Ovary (tissue), 10 donors: ENCODE measurements at regions of chr11 and their contacts with region 1.

Region 1: DNA sequence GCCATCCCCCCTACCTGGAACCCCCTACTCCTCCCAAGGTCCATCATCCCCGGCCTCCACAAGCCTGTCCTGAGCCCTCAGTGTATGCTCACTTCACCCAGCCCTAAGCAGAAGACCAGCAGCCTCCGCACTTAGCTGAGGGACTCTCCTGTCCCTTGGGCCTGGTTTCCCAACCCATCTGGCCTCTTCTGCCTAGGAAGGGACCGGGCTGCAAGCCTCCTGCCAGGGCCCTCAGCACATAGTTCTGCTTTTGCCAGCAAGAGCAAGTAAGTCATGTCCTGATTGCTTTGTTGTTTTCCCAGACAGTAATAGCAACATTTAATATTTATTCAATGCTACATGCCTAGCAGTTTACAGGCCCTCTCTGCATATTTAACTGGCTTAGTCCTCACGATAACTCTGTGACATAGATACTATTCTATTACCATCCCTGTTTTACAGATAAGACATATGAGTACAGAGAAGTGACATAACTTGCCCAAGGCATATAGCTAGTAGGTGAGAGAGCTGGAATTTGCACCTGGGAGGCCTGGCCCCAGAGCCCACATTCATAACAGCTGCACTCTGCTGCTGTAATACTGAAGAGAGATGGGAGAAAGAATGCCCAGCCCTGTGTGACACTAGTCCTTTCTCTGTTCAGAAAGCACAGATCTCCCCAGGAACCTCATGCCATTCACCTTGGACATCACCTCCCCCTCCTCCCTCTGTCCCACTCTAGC is 139.2 kb downstream of the PARVA start:
- DNase-seq: no peak
- H3K4me3 ChIP-seq: no peak overlapping the region
- H3K27ac ChIP-seq: no peak overlapping the region
- H3K4me1 ChIP-seq: no peaks in the 10 kb centered on the region
- H3K27me3 ChIP-seq: no peaks in the 10 kb centered on the region
- CTCF ChIP-seq: no peak
- EP300 ChIP-seq: no peak
- POLR2A ChIP-seq: no peak

Region 2: GRCh38 chr11:12319988-12320387 is 196.6 kb before region 1 on chr11:
- intact Hi-C with region 1: loop called in 1 of 4 experiments (anchors 10 kb)
- DNase-seq: no peak
- H3K4me3 ChIP-seq: no peak overlapping the region
- H3K27ac ChIP-seq: no peak overlapping the region
- H3K4me1 ChIP-seq: peaks cover 4% of the 10 kb centered on the region
- H3K27me3 ChIP-seq: peaks cover 2% of the 10 kb centered on the region
- CTCF ChIP-seq: no peak
- EP300 ChIP-seq: no peak
- POLR2A ChIP-seq: no peak

Region 3: DNA sequence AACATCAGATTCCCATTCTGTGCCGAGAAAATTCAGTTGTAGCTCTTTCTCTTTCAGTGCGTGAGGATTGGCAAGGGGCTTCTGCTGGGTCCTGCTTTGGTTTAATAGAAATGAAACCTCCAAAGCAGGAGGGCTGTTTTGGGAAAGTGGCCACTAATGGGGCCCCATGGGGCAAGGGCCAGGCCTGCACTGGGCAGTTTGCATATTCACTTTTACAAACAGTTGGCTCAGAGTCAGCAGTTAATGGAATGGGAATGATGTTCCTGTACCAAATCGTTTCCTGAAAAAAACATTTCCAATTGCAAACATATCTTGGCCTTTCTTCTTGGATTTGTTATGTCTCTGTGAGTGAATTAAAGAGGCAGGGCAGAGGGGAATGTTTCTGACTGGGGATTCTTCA is 47.1 kb before region 1 on chr11:
- intact Hi-C with region 1: no loop called
- DNase-seq: peak in 4 of 5 donors; percentile 26 to 62 (median 44)
- H3K4me3 ChIP-seq: no peak overlapping the region
- H3K27ac ChIP-seq: peak overlapping the region in 1 of 2 donors; percentile 7
- H3K4me1 ChIP-seq: peaks cover 21% of the 10 kb centered on the region
- H3K27me3 ChIP-seq: no peaks in the 10 kb centered on the region
- CTCF ChIP-seq: no peak
- EP300 ChIP-seq: no peak
- POLR2A ChIP-seq: no peak